ENCODE measurements at regions of chr11 and their contacts with region 1.

Region 1: GRCh38 chr11:6443269-6444003 is 2.6 kb upstream of the HPX start:
- DNase-seq: peak; percentile 69
- H3K4me3 Mint-ChIP-seq: no peak overlapping the region
- H3K27ac Mint-ChIP-seq: no peak overlapping the region
- H3K4me1 Mint-ChIP-seq: no peaks in the 10 kb centered on the region
- H3K27me3 Mint-ChIP-seq: no peaks in the 10 kb centered on the region

Region 2: GRCh38 chr11:6240781-6241180 is 202.7 kb before region 1 on chr11:
- CTCF ChIA-PET with region 1: no interaction called
- intact Hi-C with region 1: no loop called
- DNase-seq: no peak
- H3K4me3 Mint-ChIP-seq: no peak overlapping the region
- H3K27ac Mint-ChIP-seq: no peak overlapping the region
- H3K4me1 Mint-ChIP-seq: no peaks in the 10 kb centered on the region
- H3K27me3 Mint-ChIP-seq: peaks cover 2% of the 10 kb centered on the region

Region 3: DNA sequence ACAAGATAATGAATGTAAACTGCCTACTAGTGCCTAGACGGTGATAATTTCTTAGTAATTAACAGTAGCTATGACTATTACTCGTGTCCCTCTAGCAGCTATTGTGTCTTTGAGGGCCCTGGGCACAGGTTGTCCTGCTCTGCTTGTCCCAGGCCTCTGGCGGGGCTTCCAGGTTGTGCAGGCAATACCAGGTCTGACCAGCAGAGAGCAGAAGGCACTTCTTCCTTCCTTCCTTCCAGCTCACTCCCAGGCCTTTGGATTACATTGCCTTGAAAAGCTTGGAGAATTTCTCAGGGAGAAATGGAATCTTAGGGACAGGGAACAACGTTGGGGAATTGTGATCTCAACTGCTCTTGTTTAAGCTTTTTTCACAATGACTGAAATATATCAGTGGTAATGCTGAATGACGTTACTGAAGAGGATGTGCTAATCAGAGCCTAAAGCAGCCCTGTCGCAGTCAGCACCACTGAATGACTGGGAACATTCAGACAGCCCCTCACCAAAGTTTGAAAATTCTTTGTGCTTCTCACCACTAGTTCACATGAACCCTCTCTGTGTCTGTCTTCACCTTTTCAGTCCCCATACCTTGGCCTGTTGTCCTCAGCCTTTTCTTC is 192.2 kb before region 1 on chr11:
- CTCF ChIA-PET with region 1: interaction called, 4 read pairs
- intact Hi-C with region 1: loop called (anchors 5 kb)
- DNase-seq: peak; percentile 73
- H3K4me3 Mint-ChIP-seq: no peak overlapping the region
- H3K27ac Mint-ChIP-seq: no peak overlapping the region
- H3K4me1 Mint-ChIP-seq: no peaks in the 10 kb centered on the region
- H3K27me3 Mint-ChIP-seq: no peaks in the 10 kb centered on the region

Region 4: GRCh38 chr11:6389921-6390724 is 53.3 kb before region 1 on chr11 and contains the start of gene SMPD1:
- CTCF ChIA-PET with region 1: interaction called, 736 read pairs
- intact Hi-C with region 1: loop called (anchors 2 kb)
- DNase-seq: peak; percentile 95
- H3K4me3 Mint-ChIP-seq: peak within 1 kb of the TSS; percentile 91
- H3K27ac Mint-ChIP-seq: peak within 1 kb of the TSS; percentile 98
- H3K4me1 Mint-ChIP-seq: peaks cover 46% of the 10 kb centered on the region
- H3K27me3 Mint-ChIP-seq: no peaks in the 10 kb centered on the region
- total RNA-seq, gene SMPD1: 24.5 to 27.5 TPM

Region 5: DNA sequence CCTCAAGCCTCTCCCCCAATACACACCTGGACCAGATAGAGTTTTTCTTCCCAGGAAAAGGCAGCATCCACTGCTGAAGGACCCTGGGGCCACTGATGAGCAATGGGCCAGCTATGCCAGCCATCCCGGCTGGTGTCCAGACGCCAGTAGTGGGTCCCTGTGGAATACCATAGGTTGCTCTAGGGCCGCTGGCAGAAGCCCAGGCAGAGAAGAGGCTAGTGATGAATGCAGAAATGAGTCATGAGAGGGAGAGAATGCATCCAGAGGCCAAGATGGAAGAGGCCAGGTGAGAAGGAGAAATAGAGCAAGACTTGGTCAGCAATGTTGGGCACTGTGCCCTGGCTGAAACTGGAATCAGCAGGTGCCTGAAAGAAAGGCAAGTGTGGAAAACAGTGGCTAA is 11.6 kb before region 1 on chr11:
- CTCF ChIA-PET with region 1: interaction called, 23 read pairs
- intact Hi-C with region 1: no loop called
- DNase-seq: no peak
- H3K4me3 Mint-ChIP-seq: no peak overlapping the region
- H3K27ac Mint-ChIP-seq: no peak overlapping the region
- H3K4me1 Mint-ChIP-seq: peaks cover 2% of the 10 kb centered on the region
- H3K27me3 Mint-ChIP-seq: no peaks in the 10 kb centered on the region

Region 6: DNA sequence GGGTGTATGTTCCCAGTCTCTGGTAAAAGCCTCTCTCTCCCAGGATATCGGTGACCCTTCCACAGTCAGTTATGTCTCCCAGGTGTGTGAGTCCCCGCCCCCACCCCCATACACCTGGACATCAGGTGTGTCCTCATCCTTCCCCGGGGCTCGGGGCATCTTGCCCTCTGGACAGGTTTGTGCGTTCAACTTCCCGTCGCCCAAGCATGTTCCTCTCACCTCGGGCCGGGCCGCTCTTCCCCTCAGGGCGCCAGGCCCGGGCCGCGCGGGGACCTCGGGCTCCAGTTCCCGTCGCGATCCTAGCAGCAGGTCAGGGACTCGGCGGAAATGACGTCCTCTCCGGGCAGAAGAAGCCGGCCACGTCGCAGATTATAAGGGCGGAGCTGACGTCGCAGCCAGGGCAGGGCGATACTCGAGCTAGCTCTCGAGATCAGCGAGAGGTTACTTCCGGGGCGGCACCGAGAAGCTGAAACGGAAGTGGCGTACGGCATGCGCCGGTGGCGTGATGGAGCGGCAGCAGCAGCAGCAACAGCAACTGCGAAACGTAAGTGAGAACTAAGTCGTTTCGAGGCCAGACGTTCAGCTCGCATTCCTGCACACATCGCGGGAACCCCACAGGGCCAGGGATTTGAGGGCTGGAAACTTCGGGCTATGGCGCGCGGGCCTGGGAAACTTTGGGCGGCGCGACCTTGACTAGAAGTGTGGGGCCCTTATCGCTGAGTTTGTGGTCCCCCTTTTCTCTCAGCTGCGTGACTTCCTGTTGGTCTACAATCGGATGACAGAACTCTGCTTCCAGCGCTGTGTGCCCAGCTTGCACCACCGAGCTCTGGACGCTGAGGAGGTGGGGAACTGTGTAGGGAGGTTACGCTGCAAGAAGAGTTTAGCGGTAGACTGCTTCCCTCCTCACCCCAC is 37.8 kb after region 1 on chr11 and contains the starts of genes ARFIP2 and TIMM10B:
- CTCF ChIA-PET with region 1: interaction called, 6 read pairs
- intact Hi-C with region 1: loop called (anchors 2 kb)
- DNase-seq: peak; percentile 99
- H3K4me3 Mint-ChIP-seq: peak within 1 kb of the TSS; percentile 94
- H3K27ac Mint-ChIP-seq: peak within 1 kb of the TSS; percentile 96
- H3K4me1 Mint-ChIP-seq: peaks cover 38% of the 10 kb centered on the region
- H3K27me3 Mint-ChIP-seq: no peaks in the 10 kb centered on the region
- total RNA-seq, gene ARFIP2: 33.5 to 37.9 TPM
- total RNA-seq, gene TIMM10B: 35.1 to 41.7 TPM

Region 7: DNA sequence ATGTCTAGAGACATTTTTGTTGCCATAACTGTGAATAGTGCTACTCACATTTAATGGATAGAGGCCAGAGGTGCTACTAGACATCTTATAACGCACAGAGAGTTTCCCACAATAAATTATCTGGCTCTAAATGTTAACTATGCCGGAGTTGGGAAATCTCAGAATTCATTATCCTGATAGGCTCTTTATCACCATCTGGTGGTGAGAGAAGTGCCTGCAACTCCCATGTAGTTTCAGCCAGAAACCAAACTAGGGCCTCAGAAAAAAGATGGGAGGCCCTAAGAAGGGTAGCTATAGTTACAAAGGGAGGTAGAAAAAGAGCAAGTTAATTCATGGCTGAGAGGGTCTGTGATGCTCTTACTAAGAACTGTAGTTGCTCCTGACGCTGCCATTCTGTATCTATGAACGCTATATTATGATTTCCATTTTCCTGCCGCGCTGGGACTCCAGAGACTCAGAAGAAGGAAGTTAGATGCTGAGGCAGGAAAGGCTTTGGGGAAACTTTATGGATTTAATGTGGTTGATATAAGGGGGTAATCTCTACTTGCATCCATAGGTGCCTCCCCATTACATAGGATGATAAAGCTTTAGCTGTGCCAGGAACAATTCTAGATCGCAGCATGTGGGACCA is 262.6 kb after region 1 on chr11:
- CTCF ChIA-PET with region 1: interaction called, 3 read pairs
- intact Hi-C with region 1: loop called (anchors 5 kb)
- DNase-seq: peak; percentile 66
- H3K4me3 Mint-ChIP-seq: no peak overlapping the region
- H3K27ac Mint-ChIP-seq: no peak overlapping the region
- H3K4me1 Mint-ChIP-seq: peaks cover 17% of the 10 kb centered on the region
- H3K27me3 Mint-ChIP-seq: no peaks in the 10 kb centered on the region

Region 8: GRCh38 chr11:7291100-7291829 is 847.8 kb after region 1 on chr11:
- CTCF ChIA-PET with region 1: no interaction called
- intact Hi-C with region 1: no loop called
- DNase-seq: no peak
- H3K4me3 Mint-ChIP-seq: no peak overlapping the region
- H3K27ac Mint-ChIP-seq: no peak overlapping the region
- H3K4me1 Mint-ChIP-seq: no peaks in the 10 kb centered on the region
- H3K27me3 Mint-ChIP-seq: peaks cover 9% of the 10 kb centered on the region